Mammary epithelial cell (primary cell): ENCODE measurements at regions of chr1 and their contacts with region 1.

Region 1: GRCh38 chr1:110619412-110620249 is 13.5 kb upstream of the KCNA2 start:
- DNase-seq: peak; percentile 71
- H3K4me3 ChIP-seq: no peak overlapping the region
- H3K27ac ChIP-seq: no peak overlapping the region
- H3K4me1 ChIP-seq: peaks cover 4% of the 10 kb centered on the region
- H3K27me3 ChIP-seq: no peaks in the 10 kb centered on the region
- CTCF ChIP-seq: peak; percentile 89 to 95

Region 2: GRCh38 chr1:110412576-110412975 is 207.1 kb before region 1 on chr1:
- CTCF ChIA-PET with region 1: no interaction called
- dilution Hi-C with region 1: no loop called
- in situ Hi-C with region 1: no loop called
- intact Hi-C with region 1: loop called (anchors 1 kb)
- DNase-seq: peak; percentile 58
- H3K4me3 ChIP-seq: no peak overlapping the region
- H3K27ac ChIP-seq: no peak overlapping the region
- H3K4me1 ChIP-seq: no peaks in the 10 kb centered on the region
- H3K27me3 ChIP-seq: no peaks in the 10 kb centered on the region
- CTCF ChIP-seq: peak; percentile 63 to 89

Region 3: DNA sequence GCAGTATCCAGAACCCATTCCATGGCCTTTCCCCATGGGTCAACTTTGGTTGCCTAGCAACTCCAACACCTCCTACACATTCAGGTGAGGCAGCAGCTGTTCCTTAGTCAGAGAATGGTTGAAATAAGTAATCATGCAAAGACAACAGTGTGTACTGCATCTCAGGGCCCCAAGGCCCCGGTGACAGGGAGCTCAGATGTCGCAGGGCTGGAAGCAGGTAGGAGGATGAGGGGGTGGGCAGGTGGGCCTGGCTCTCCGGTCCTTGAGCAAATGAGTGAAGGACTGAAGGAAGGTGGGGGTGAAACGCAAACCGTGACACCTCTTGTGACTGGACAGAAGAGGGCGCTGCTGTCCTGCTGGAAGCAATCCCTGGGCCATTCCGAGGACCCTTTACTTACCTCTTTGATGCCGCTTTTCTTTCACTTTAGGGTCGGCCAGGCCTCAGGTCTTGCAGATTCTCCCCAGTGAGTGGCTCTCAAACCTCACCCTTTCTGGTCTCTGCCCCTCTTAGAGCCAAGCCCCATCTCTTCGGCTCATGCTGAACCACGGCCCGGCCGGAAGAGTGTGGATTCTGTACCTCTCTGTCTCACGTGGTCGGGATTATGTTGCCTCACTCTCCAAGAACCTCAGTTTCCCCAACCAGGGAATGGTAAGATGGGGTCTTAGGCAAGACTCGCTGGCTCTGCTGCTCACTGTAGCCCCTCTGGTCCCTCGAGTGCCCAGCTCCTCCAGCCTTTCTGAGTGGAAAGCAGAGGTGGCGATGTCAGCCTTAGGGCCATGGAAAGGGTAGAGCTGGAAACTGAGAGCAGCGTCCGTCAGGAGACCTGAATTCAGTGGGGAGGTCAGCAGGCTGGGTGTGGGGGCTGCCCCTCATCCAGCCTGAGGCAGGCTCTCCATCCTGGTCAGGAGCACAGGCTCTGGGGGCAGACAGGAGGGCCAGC is 95.0 kb before region 1 on chr1:
- CTCF ChIA-PET with region 1: interaction called, 3 read pairs
- dilution Hi-C with region 1: no loop called
- in situ Hi-C with region 1: loop called in 1 of 2 experiments (anchors 5 kb)
- intact Hi-C with region 1: loop called (anchors 1 kb)
- DNase-seq: peak; percentile 41
- H3K4me3 ChIP-seq: no peak overlapping the region
- H3K27ac ChIP-seq: no peak overlapping the region
- H3K4me1 ChIP-seq: no peaks in the 10 kb centered on the region
- H3K27me3 ChIP-seq: peaks cover 2% of the 10 kb centered on the region
- CTCF ChIP-seq: peak; percentile 64 to 81

Region 4: DNA sequence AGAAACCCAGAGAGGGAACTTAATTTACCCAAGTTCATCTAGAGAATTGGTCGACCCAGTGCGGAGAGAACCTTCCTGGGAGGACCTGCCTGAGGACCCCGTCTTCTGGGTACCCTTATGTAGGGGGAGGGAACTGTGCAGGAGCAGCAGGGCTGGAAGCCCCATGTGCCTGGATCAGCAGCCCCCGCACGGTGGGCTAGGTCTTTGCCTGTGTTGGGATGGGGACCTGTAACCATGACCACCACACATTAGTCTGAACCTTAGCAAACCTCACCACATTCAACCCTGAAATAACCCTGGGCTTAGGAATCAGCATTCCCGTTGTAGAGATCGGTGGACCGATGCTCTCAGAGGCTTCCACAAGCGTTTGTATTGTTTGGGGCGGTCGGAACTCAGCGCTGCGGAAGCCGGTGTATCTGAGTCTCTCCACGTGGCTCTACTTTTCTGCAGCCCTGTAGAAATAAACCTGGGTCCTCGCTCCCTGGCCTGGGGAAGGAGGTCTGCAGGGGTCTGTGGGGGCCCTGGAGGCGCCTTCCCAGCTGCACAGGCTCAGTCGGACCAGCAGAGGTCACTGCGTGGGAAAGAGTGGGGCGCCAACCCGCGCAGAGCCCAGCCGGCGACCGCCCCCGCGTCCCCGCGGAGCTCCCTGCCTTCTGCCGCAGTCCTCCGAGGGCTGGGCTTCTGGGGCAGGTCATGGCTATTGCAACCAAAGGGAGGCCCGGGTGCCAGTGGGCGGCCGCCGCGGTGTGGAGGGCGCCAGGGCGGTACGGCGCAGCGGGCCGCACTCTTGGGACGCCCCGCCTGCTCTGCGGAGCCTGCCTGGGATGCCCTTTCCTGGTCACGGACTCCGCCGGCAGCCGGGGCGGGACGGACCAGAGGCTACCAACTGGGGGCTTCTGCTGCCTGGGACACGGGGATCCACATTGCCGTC is 64.5 kb before region 1 on chr1:
- CTCF ChIA-PET with region 1: no interaction called
- dilution Hi-C with region 1: no loop called
- in situ Hi-C with region 1: no loop called
- intact Hi-C with region 1: loop called (anchors 1 kb)
- DNase-seq: no peak
- H3K4me3 ChIP-seq: peak overlapping the region in 2 of 3 experiments; percentile 28 to 36
- H3K27ac ChIP-seq: no peak overlapping the region
- H3K4me1 ChIP-seq: peaks cover 10% of the 10 kb centered on the region
- H3K27me3 ChIP-seq: peaks cover 13% of the 10 kb centered on the region
- CTCF ChIP-seq: peak; percentile 27 to 63

Region 5: DNA sequence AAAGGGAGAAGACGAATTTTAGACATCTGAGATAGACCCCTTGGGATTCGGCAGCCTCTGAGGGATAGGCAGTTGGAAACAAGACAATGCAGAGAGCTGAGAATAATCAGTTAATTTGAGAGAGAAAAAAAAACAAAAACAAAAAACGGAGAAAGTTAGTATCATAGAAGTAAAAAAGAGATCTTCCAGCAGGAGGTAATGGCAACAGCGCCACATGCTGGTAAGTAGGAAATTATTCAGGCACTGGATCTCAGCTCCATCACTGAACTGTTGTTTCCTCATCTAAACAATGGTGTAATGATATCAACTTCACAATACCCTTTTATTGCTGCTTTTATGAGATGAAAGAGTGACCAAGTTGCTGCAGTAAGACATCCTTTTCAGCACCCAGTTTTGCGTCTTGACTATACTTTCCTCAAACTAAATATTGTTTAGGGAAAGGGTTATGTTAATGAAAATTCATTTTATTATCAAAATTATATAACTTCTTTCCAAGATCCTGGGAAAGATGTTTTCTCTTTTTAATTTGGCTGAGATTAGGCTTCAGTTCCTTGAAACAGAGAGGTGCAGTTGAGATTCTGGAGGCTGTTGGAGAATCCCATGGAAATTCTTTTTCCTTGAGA is 146.5 kb after region 1 on chr1:
- CTCF ChIA-PET with region 1: no interaction called
- dilution Hi-C with region 1: loop called (anchors 5 kb)
- in situ Hi-C with region 1: no loop called
- intact Hi-C with region 1: loop called (anchors 1 kb)
- DNase-seq: peak; percentile 17
- H3K4me3 ChIP-seq: no peak overlapping the region
- H3K27ac ChIP-seq: no peak overlapping the region
- H3K4me1 ChIP-seq: peaks cover 12% of the 10 kb centered on the region
- H3K27me3 ChIP-seq: no peaks in the 10 kb centered on the region
- CTCF ChIP-seq: peak; percentile 83 to 93

Region 6: GRCh38 chr1:110829955-110830553 is 210.4 kb after region 1 on chr1:
- CTCF ChIA-PET with region 1: no interaction called
- dilution Hi-C with region 1: no loop called
- in situ Hi-C with region 1: no loop called
- intact Hi-C with region 1: loop called (anchors 2 kb)
- DNase-seq: peak; percentile 29
- H3K4me3 ChIP-seq: no peak overlapping the region
- H3K27ac ChIP-seq: no peak overlapping the region
- H3K4me1 ChIP-seq: no peaks in the 10 kb centered on the region
- H3K27me3 ChIP-seq: no peaks in the 10 kb centered on the region
- CTCF ChIP-seq: peak; percentile 82 to 86

Region 7: DNA sequence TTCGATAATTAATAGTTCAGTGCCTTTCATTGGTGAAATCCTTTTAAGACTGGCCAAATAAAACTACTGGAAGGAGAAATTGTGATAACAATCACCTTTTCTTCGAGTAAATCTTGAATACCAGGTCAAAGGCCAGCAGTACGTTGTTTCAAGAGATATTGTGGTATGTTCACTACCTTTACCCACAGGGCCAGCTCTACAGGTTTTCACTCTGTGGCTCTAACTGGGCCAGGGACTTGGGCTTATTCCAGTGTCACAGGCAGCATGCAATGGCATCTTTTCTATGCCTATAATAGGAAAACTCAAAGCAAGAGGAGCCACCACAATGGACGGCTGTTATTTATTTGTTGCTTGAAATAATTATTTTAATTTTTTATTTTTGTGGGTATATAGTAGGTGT is 370.9 kb after region 1 on chr1:
- CTCF ChIA-PET with region 1: no interaction called
- dilution Hi-C with region 1: no loop called
- in situ Hi-C with region 1: no loop called
- intact Hi-C with region 1: loop called (anchors 5 kb)
- DNase-seq: no peak
- H3K4me3 ChIP-seq: no peak overlapping the region
- H3K27ac ChIP-seq: no peak overlapping the region
- H3K4me1 ChIP-seq: peaks cover 11% of the 10 kb centered on the region
- H3K27me3 ChIP-seq: peaks cover 5% of the 10 kb centered on the region
- CTCF ChIP-seq: no peak